Endothelial cell of umbilical vein (primary cell): ENCODE measurements at regions of chr1 and their contacts with region 1.

Region 1: GRCh38 chr1:156480411-156481192 is 20.0 kb downstream of the MEF2D start:
- DNase-seq: peak; percentile 55
- H3K4me3 ChIP-seq: no peak overlapping the region
- H3K27ac ChIP-seq: no peak overlapping the region
- H3K4me1 ChIP-seq: peaks cover 8% of the 10 kb centered on the region
- H3K27me3 ChIP-seq: no peaks in the 10 kb centered on the region
- CTCF ChIP-seq: peak; percentile 67 to 87
- POLR2A ChIP-seq: no peak

Region 2: DNA sequence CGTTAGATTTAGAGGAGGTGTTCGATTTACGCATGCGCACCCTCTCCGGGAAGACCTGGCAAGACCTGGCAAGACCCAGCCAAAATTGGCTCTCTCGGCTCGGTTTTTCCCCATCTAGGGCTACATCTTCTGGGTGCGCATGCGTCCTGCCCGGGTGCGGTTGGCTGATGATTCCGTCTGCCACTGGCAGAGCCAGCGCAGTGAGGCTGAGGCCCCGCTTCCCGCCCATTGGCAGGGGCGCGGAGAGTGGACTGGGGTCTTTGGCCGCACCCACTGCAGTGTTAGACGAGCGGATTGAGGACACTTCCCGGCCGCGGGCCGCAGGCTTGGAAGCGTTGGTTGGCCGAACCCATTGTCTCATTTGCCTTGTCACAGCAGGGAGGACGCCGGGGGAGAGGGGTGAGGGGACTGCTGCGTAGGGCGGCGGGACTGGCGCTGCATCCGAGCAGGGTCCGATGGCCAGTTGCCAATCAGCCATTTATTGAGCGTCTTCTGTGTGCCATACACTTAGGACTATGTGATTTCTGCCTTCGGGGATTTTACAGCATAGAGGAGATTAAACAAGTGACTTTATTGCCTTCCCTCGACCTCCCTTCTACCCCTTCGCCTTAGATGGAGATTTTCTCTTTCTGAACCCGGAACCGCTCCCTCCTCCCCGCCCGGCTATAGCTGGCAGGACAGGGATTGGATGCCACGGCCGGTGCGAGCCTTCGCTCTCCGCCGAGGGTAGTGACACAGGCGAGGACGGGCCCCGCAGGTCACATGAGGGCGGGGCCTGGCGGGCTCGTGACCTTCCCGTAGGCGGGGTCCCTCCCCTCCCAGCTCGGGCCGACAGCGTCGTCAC is 23.8 kb before region 1 on chr1:
- CTCF ChIA-PET with region 1: interaction called, 19 read pairs
- POLR2A ChIA-PET with region 1: no interaction called
- dilution Hi-C with region 1: no loop called
- intact Hi-C with region 1: no loop called
- DNase-seq: peak; percentile 95
- H3K4me3 ChIP-seq: peak overlapping the region; percentile 11 to 73 (median 31)
- H3K27ac ChIP-seq: peak overlapping the region; percentile 80
- H3K4me1 ChIP-seq: peaks cover 11% of the 10 kb centered on the region
- H3K27me3 ChIP-seq: peaks cover 6 to 10% of the 10 kb centered on the region in 2 experiments
- CTCF ChIP-seq: no peak
- POLR2A ChIP-seq: peak; percentile 80

Region 3: GRCh38 chr1:156508163-156508887 is 27.7 kb after region 1 on chr1:
- CTCF ChIA-PET with region 1: interaction called, 149 read pairs
- POLR2A ChIA-PET with region 1: interaction called, 3 read pairs
- dilution Hi-C with region 1: no loop called
- intact Hi-C with region 1: loop called (anchors 1 kb)
- DNase-seq: no peak
- H3K4me3 ChIP-seq: no peak overlapping the region
- H3K27ac ChIP-seq: no peak overlapping the region
- H3K4me1 ChIP-seq: peaks cover 18% of the 10 kb centered on the region
- H3K27me3 ChIP-seq: peaks cover 0 to 3% of the 10 kb centered on the region in 2 experiments
- CTCF ChIP-seq: no peak
- POLR2A ChIP-seq: no peak

Region 4: DNA sequence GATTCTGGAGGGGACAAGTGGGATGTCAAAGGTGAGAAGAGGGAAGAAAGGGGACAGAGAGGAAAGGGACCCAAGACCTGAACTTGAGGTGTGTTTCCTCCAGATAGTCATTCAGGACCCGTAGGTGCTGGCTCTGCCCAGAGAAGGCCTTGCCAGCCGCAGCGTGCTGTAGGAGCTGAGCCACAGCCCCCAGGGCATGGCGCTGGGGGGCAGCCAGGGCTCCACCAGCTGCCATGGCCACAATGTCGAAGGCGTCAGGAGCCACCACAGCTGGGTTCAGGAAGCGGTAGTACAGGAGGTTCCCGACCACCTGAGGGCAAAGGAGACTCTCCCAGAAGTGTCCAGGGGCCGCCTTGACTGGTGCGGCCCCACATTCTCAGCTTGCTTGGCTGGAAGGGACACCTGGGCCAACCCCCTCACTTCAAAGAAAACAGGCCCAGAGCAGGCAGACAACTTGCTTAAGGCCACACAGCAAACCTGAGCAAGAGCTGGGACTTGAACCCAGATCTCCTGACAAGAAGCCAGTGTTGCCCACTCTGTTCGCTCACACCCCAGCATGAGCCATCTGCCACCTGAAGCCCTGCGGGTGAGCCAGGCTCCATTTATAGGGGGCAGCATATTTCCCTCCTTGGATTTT is 53.9 kb after region 1 on chr1:
- CTCF ChIA-PET with region 1: interaction called, 21 read pairs
- POLR2A ChIA-PET with region 1: no interaction called
- dilution Hi-C with region 1: no loop called
- intact Hi-C with region 1: loop called (anchors 5 kb)
- DNase-seq: no peak
- H3K4me3 ChIP-seq: no peak overlapping the region
- H3K27ac ChIP-seq: no peak overlapping the region
- H3K4me1 ChIP-seq: no peaks in the 10 kb centered on the region
- H3K27me3 ChIP-seq: no peaks in the 10 kb centered on the region
- CTCF ChIP-seq: no peak
- POLR2A ChIP-seq: no peak

Region 5: GRCh38 chr1:156571949-156572662 is 91.5 kb after region 1 on chr1 and contains the start of gene IQGAP3:
- CTCF ChIA-PET with region 1: interaction called, 42 read pairs
- POLR2A ChIA-PET with region 1: no interaction called
- dilution Hi-C with region 1: no loop called
- intact Hi-C with region 1: loop called (anchors 2 kb)
- DNase-seq: peak; percentile 73
- H3K4me3 ChIP-seq: peak within 1 kb of the TSS; percentile 66 to 71 (median 68)
- H3K27ac ChIP-seq: peak within 1 kb of the TSS; percentile 61
- H3K4me1 ChIP-seq: peaks cover 13% of the 10 kb centered on the region
- H3K27me3 ChIP-seq: peaks cover 3 to 6% of the 10 kb centered on the region in 2 experiments
- CTCF ChIP-seq: no peak
- POLR2A ChIP-seq: no peak
- total RNA-seq, gene IQGAP3: 48.6 and 60.7 TPM in 2 replicates

Region 6: DNA sequence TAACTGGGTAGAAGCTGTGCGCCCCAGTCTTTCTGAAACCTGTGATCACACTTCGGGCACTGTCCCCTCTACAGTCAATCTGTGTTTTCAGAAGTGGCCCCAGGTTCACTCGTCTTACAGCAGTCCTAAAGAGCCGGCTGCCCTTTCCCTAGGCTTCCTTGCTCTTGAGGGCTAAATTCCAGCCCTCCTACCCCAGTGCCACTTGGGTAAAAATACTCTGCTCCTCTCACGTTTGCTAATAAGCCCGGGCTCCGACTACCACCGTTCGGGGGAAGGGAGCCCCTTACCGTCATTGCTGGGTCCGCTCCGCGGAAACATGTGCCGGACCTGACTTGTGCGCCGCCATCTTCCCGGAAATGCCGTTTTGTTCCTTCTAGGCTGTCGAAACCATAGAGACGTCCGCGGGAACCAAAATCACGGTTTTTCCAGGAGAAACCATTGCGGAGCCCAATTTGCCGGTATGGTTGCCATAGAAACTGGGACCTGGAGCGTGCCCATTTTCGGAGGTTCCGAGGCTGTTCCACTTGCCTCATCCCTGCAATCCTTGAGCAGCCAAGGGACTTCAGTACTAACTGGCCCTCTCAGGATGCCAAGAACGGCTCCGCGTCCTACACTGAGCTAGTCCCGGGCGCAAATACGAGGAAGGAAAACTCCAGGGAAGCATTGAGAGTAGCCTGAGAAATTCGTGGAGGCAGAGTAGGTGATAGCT is 120.7 kb after region 1 on chr1 and contains the start of gene GPATCH4:
- CTCF ChIA-PET with region 1: interaction called, 15 read pairs
- POLR2A ChIA-PET with region 1: no interaction called
- dilution Hi-C with region 1: no loop called
- intact Hi-C with region 1: no loop called
- DNase-seq: peak; percentile 90
- H3K4me3 ChIP-seq: peak within 1 kb of the TSS; percentile 50 to 87 (median 58)
- H3K27ac ChIP-seq: peak within 1 kb of the TSS; percentile 60
- H3K4me1 ChIP-seq: peaks cover 10% of the 10 kb centered on the region
- H3K27me3 ChIP-seq: no peaks in the 10 kb centered on the region
- CTCF ChIP-seq: no peak
- POLR2A ChIP-seq: peak; percentile 90
- total RNA-seq, gene GPATCH4: 29.2 and 32.0 TPM in 2 replicates

Region 7: DNA sequence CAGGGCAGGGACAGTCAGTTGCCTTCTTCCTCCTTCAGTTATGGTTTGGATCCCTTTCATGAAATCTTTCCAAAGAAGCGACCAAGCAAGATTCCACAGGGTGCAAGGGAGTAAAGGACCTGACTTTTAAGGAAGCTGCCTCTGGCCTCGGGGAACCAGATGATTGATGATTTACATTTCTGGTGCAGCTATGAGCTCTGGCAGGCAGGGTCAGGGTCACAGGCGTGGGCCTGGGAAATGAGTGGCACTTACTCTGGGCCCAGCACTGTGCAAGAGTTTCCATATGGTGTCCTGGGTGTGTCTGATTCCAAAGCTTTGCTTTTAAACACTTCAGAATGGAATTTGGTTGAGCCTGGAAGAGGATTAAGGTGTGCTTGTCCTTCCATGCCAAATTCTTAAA is 232.0 kb after region 1 on chr1:
- CTCF ChIA-PET with region 1: no interaction called
- POLR2A ChIA-PET with region 1: no interaction called
- dilution Hi-C with region 1: no loop called
- intact Hi-C with region 1: no loop called
- DNase-seq: no peak
- H3K4me3 ChIP-seq: no peak overlapping the region
- H3K27ac ChIP-seq: no peak overlapping the region
- H3K4me1 ChIP-seq: no peaks in the 10 kb centered on the region
- H3K27me3 ChIP-seq: no peaks in the 10 kb centered on the region
- CTCF ChIP-seq: no peak
- POLR2A ChIP-seq: no peak

Region 8: GRCh38 chr1:157000686-157001085 is 520.1 kb after region 1 on chr1:
- CTCF ChIA-PET with region 1: no interaction called
- POLR2A ChIA-PET with region 1: no interaction called
- dilution Hi-C with region 1: no loop called
- intact Hi-C with region 1: no loop called
- DNase-seq: peak; percentile 6
- H3K4me3 ChIP-seq: no peak overlapping the region
- H3K27ac ChIP-seq: no peak overlapping the region
- H3K4me1 ChIP-seq: peaks cover 20% of the 10 kb centered on the region
- H3K27me3 ChIP-seq: no peaks in the 10 kb centered on the region
- CTCF ChIP-seq: no peak
- POLR2A ChIP-seq: no peak

Region 9: GRCh38 chr1:157019457-157019856 is 538.9 kb after region 1 on chr1:
- CTCF ChIA-PET with region 1: no interaction called
- POLR2A ChIA-PET with region 1: no interaction called
- dilution Hi-C with region 1: no loop called
- intact Hi-C with region 1: no loop called
- DNase-seq: no peak
- H3K4me3 ChIP-seq: no peak overlapping the region
- H3K27ac ChIP-seq: no peak overlapping the region
- H3K4me1 ChIP-seq: no peaks in the 10 kb centered on the region
- H3K27me3 ChIP-seq: no peaks in the 10 kb centered on the region
- CTCF ChIP-seq: no peak
- POLR2A ChIP-seq: no peak